Activated T-helper 1 cell treated with anti-CD3 and anti-CD28 coated beads, Interleukin-12 subunit alpha, Interleukin-12 subunit beta, Interleukin-2, Interleukin-4 antibody, amounts not matched to agents 30 ng/mL and 10 ng/mL and 1 ng/mL, durations not matched to agents 14 hours and 24 hours and 36 hours (primary cell): ENCODE measurements at regions of chr3 and their contacts with region 1.

Region 1: GRCh38 chr3:152241142-152242017 is 27.3 kb upstream of the MBNL1 start:
- DNase-seq: no peak
- H3K4me3 Mint-ChIP-seq: peak overlapping the region; percentile 57
- H3K27ac Mint-ChIP-seq: peak overlapping the region; percentile 70
- H3K4me1 Mint-ChIP-seq: peaks cover 81% of the 10 kb centered on the region
- H3K27me3 Mint-ChIP-seq: no peaks in the 10 kb centered on the region

Region 2: GRCh38 chr3:151933234-151933853 is 308.0 kb before region 1 on chr3:
- intact Hi-C with region 1: no loop called
- DNase-seq: no peak
- H3K4me3 Mint-ChIP-seq: no peak overlapping the region
- H3K27ac Mint-ChIP-seq: no peak overlapping the region
- H3K4me1 Mint-ChIP-seq: no peaks in the 10 kb centered on the region
- H3K27me3 Mint-ChIP-seq: peaks cover 11% of the 10 kb centered on the region

Region 3: DNA sequence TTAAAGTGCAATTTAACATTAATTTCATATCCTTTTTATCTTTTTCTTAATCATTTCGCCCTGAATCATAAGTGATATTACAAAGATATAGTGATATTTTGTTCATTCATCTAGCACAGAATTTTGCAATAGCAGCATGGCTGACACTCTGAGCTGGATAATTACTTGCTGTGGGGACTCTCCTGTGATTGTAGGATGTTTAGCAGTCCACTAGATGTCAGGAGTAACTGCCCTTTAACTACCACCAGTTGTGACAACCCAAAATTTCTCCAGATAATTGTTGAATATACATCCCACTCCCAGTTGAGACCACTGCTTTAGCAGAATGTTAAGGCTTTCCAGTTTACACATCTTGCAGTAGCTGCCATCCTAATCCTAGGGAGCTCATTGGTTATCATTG is 169.5 kb before region 1 on chr3:
- intact Hi-C with region 1: loop called (anchors 5 kb)
- DNase-seq: no peak
- H3K4me3 Mint-ChIP-seq: no peak overlapping the region
- H3K27ac Mint-ChIP-seq: no peak overlapping the region
- H3K4me1 Mint-ChIP-seq: no peaks in the 10 kb centered on the region
- H3K27me3 Mint-ChIP-seq: peaks cover 2% of the 10 kb centered on the region

Region 4: GRCh38 chr3:152193673-152194267 is 47.6 kb before region 1 on chr3:
- intact Hi-C with region 1: loop called (anchors 1 kb)
- DNase-seq: no peak
- H3K4me3 Mint-ChIP-seq: peak overlapping the region; percentile 71
- H3K27ac Mint-ChIP-seq: peak overlapping the region; percentile 87
- H3K4me1 Mint-ChIP-seq: peaks cover 87% of the 10 kb centered on the region
- H3K27me3 Mint-ChIP-seq: no peaks in the 10 kb centered on the region

Region 5: GRCh38 chr3:152205097-152205593 is 36.2 kb before region 1 on chr3:
- intact Hi-C with region 1: loop called (anchors 1 kb)
- DNase-seq: no peak
- H3K4me3 Mint-ChIP-seq: peak overlapping the region; percentile 88
- H3K27ac Mint-ChIP-seq: peak overlapping the region; percentile 95
- H3K4me1 Mint-ChIP-seq: peaks cover 83% of the 10 kb centered on the region
- H3K27me3 Mint-ChIP-seq: no peaks in the 10 kb centered on the region

Region 6: DNA sequence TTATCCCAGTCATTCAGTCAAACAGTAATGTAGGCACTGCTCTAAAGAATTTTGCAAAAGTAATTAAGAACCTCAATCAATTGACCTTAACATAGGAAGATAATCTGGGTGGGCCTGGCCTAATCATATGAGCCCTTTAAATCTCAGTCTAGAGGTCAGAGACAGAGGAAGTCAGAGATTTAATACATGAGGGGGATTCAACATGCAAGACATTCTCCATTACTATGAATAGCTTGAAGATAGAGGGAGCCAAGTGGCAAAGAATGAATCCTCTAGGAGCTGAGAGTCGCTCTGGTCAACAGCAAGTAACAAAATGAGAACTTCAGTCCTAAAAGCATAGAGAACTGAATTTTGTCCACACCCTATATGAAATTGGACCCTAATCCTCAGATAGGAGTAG is 11.7 kb before region 1 on chr3:
- intact Hi-C with region 1: loop called (anchors 1 kb)
- DNase-seq: no peak
- H3K4me3 Mint-ChIP-seq: no peak overlapping the region
- H3K27ac Mint-ChIP-seq: no peak overlapping the region
- H3K4me1 Mint-ChIP-seq: peaks cover 56% of the 10 kb centered on the region
- H3K27me3 Mint-ChIP-seq: no peaks in the 10 kb centered on the region

Region 7: DNA sequence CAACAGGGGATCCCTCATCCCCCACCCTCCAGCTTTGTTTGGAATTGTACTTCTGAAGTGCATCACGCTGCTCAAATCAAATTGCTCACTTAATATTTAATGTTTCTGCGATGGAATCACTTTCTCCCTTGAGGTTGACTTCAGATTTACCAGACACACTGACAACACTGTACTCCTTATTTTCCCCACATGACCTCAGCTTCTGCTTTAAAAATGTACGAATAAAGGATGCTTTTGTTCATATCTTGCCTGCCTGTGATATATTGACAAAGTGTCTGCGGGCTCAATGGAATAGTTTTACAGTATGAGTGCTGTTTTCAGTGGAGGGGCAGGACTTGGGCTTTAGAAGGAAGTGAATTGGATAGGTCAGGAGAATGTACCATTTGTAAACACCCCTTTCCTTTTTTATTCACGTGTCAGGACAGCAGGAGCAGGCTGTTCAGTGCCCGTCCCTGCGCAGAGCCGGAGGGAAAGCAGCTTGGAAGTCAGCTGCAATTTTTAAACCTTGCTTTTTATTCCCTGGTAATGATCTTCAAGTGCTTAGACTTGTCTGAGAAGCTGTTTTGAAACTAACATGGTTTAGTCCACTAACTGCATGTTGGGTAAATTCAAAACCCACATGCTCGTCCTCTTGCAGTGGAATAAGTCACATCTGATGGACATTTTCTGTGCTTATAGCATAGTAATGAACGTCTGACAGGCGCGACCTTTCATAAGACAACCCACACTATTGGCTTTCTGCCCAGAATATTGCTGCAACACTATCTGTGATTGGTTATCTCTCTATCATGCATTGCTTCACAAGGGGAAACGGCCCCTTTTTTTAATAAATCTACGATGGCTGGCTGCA is 57.2 kb after region 1 on chr3:
- intact Hi-C with region 1: loop called (anchors 1 kb)
- DNase-seq: peak; percentile 29
- H3K4me3 Mint-ChIP-seq: peak overlapping the region; percentile 68
- H3K27ac Mint-ChIP-seq: peak overlapping the region; percentile 94
- H3K4me1 Mint-ChIP-seq: peaks cover 74% of the 10 kb centered on the region
- H3K27me3 Mint-ChIP-seq: no peaks in the 10 kb centered on the region